CD14-positive monocyte (primary cell): ENCODE measurements at regions of chr9 and their contacts with region 1.

Region 1: DNA sequence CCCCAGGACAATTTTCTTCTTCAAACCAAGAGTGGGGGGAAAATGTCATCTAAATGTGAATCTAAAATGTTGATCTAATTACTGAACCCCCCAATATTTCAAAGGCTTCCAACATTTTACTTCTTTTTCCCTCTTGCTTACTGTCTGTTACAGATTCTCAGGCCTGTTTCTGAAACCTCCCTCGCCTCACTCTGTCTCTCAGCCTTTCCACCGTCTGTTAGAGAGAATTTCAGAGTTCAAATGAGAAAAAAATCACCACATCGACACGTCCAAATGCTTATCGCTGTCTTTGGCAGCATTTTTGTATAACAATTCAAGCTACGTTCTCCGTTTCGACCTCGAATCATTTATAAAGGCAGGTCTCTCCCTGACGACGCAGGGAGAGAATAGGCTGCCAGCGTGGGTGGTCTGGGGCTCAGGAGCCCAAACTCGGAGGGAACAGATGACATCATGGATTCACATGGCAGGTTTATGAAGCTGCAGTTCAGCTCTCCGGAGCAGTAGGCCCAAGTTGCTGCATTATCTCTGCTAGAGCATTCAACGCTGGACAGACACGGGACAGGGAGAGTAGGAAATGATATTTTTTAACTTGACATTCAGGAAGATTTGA is 139.8 kb downstream of the GAS1 start:
- DNase-seq: no peak
- H3K4me3 ChIP-seq: no peak overlapping the region
- H3K4me3 Mint-ChIP-seq: no peak overlapping the region
- H3K27ac ChIP-seq: no peak overlapping the region
- H3K27ac Mint-ChIP-seq: no peak overlapping the region
- H3K4me1 ChIP-seq: no peaks in the 10 kb centered on the region
- H3K4me1 Mint-ChIP-seq: no peaks in the 10 kb centered on the region
- H3K27me3 ChIP-seq: no peaks in the 10 kb centered on the region
- H3K27me3 Mint-ChIP-seq: peaks cover 0 to 3% (median 1%) of the 10 kb centered on the region in 3 donors
- CTCF ChIP-seq: no peak

Region 2: GRCh38 chr9:86721843-86722711 is 85.4 kb before region 1 on chr9:
- intact Hi-C with region 1: loop called in 1 of 2 experiments (anchors 10 kb)
- DNase-seq: no peak
- H3K4me3 ChIP-seq: no peak overlapping the region
- H3K4me3 Mint-ChIP-seq: no peak overlapping the region
- H3K27ac ChIP-seq: no peak overlapping the region
- H3K27ac Mint-ChIP-seq: no peak overlapping the region
- H3K4me1 ChIP-seq: no peaks in the 10 kb centered on the region
- H3K4me1 Mint-ChIP-seq: peaks cover 4% of the 10 kb centered on the region
- H3K27me3 ChIP-seq: peaks cover 0 to 3% of the 10 kb centered on the region in 2 donors
- H3K27me3 Mint-ChIP-seq: peaks cover 3 to 13% (median 8%) of the 10 kb centered on the region in 3 donors
- CTCF ChIP-seq: no peak